ENCODE measurements at regions of chr19 and their contacts with region 1.

Region 1: DNA sequence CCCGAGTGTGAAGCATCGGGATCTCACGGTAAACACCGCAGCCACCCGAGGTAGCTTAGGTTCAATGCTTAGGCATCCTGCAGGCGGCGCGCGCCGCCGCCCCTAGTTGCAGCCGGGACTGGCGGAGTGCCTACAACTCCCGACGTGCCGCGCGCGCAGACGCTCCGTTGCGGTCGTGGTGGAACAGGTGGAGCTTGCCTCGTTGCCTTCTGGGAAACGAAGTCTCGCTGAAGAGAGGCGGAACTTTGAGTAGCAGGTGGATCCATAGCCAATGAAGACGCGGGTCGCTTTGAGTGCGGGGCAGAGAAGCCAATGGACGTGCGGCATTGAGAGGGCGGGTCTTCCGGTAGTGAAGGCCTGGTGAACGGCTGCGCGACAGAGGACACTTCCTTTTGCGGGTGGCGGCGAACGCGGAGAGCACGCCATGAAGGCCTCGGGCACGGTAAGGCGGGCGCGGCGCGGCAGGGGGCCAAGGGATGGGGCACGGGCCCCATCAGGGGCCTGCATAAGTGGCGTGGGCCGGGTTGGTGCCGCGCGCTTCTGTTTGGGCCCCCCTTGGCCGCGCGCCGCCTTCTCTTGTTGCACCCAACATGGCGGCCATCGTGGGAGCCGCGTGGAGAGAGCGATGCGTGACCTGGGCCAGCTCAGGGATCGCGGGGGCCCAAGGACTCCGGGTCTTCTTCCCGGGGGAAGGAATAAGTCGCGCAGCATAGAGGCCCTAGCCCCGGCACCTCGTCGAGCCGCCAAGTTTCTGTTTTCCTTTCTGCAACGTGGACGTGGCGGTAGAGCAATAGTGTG is at the start of gene RPL18A:
- DNase-seq: peak; percentile 98 to 99 (median 99)
- ATAC-seq: peak; percentile 94
- H3K4me3 ChIP-seq: peak within 1 kb of the TSS; percentile 89
- H3K4me1 ChIP-seq: peaks cover 39% of the 10 kb centered on the region
- CTCF ChIP-seq: peak; percentile 78
- total RNA-seq, gene RPL18A: 1,368 to 1,650 (median 1,462) TPM

Region 2: GRCh38 chr19:17703824-17704463 is 155.8 kb before region 1 on chr19:
- intact Hi-C with region 1: loop called (anchors 10 kb)
- DNase-seq: peak in 2 of 3 donors; percentile 73 to 81
- ATAC-seq: peak; percentile 88
- H3K4me3 ChIP-seq: no peak overlapping the region
- H3K4me1 ChIP-seq: no peaks in the 10 kb centered on the region
- CTCF ChIP-seq: peak; percentile 80

Region 3: GRCh38 chr19:17794731-17795536 is 64.8 kb before region 1 on chr19 and contains the start of gene B3GNT3:
- intact Hi-C with region 1: loop called in 1 of 2 experiments (anchors 10 kb)
- DNase-seq: peak; percentile 95 to 97 (median 96)
- ATAC-seq: peak; percentile 52
- H3K4me3 ChIP-seq: peak within 1 kb of the TSS; percentile 63
- H3K4me1 ChIP-seq: peaks cover 36% of the 10 kb centered on the region
- CTCF ChIP-seq: no peak
- total RNA-seq, gene B3GNT3: 77.6 to 205 (median 189) TPM

Region 4: GRCh38 chr19:17932485-17933338 is 73.0 kb after region 1 on chr19 and contains the start of gene CCDC124:
- intact Hi-C with region 1: loop called in 1 of 2 experiments (anchors 2 kb)
- DNase-seq: peak; percentile 94 to 96 (median 95)
- ATAC-seq: peak; percentile 99
- H3K4me3 ChIP-seq: peak within 1 kb of the TSS; percentile 77
- H3K4me1 ChIP-seq: peaks cover 19% of the 10 kb centered on the region
- CTCF ChIP-seq: peak; percentile 72
- total RNA-seq, gene CCDC124: 30.2 to 78.4 (median 56.3) TPM

Region 5: GRCh38 chr19:17963937-17964691 is 104.4 kb after region 1 on chr19:
- intact Hi-C with region 1: no loop called
- DNase-seq: no peak
- ATAC-seq: no peak
- H3K4me3 ChIP-seq: no peak overlapping the region
- H3K4me1 ChIP-seq: no peaks in the 10 kb centered on the region
- CTCF ChIP-seq: no peak

Measured in mucosa of descending colon (tissue), 3 donors.